ENCODE measurements at regions of chr15 and their contacts with region 1.

Region 1: GRCh38 chr15:101242160-101242998 is 9.5 kb downstream of the CHSY1 start:
- DNase-seq: peak; percentile 59
- ATAC-seq: 0 out of 2 replicates have a peak, but pooled peaks have one; percentile 7
- H3K4me3 ChIP-seq: no peak overlapping the region
- H3K27ac ChIP-seq: peak overlapping the region; percentile 27; the same call in 1 of the 2 replicates
- H3K4me1 ChIP-seq: peaks cover 34% of the 10 kb centered on the region
- H3K27me3 ChIP-seq: no peaks in the 10 kb centered on the region
- CTCF ChIP-seq: no peak
- POLR2A ChIP-seq: no peak
- RAD21 ChIP-seq: no peak

Region 2: DNA sequence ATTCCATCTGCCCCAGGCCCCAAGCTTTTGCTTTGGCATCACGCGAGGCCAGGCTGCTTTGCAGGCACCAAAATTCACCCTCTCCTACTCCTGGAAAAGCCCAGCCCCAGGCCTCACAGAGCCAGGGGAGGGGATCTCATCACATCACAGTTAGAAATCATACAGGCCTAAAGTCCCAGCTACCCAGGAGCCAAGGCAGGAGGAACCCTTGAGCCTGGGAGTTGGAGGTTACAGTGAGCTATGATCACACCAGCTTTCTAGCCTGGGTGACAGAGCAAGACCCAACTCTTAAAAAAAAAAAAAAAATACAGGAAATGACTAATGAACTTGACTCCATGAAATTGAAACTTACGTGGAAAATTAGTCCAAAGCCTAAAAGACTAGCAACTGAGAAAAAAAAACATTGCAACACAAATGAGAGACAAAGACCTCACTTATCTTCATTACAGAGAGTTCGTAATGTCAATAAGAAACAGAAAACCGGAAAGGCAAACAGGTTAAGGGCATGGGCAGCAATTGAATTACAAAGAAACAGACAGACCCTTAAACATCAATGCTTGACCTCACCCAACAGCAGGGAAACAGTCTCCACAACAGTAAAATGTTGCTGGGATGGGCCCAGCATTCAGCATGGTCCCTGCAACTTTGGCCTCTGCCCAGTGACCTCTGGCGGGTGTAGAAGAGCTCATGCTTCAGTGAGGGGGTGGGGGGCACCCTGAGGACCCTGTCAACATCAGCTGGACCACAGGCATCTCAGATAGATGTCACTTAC is 171.7 kb before region 1 on chr15:
- CTCF ChIA-PET with region 1: no interaction called
- POLR2A ChIA-PET with region 1: no interaction called
- dilution Hi-C with region 1: no loop called
- in situ Hi-C with region 1: no loop called
- intact Hi-C with region 1: no loop called
- DNase-seq: peak; percentile 89
- ATAC-seq: peak; percentile 46
- H3K4me3 ChIP-seq: no peak overlapping the region
- H3K27ac ChIP-seq: peak overlapping the region; percentile 94
- H3K4me1 ChIP-seq: peaks cover 25% of the 10 kb centered on the region
- H3K27me3 ChIP-seq: no peaks in the 10 kb centered on the region
- CTCF ChIP-seq: no peak
- POLR2A ChIP-seq: peak; percentile 75
- RAD21 ChIP-seq: no peak

Region 3: DNA sequence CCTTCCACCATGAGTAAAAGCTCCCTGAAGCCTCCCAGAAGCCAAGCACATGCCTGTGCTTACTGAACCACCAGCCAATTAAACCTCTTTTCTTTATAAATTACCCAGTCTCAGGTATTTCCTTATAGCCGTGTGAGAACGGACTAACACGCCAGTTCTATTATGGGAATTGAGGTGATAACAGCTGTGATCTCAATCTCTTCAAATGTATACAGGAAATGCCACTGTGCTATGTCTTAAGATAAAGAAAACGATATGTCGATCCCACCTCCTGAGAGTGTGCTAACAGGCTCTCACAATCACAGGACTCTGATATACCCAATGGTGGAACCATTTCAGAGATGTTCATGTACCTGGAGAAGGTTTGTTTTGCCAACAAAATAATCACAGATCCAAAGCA is 16.7 kb before region 1 on chr15:
- CTCF ChIA-PET with region 1: interaction called, 4 read pairs
- POLR2A ChIA-PET with region 1: no interaction called
- dilution Hi-C with region 1: no loop called
- in situ Hi-C with region 1: no loop called
- intact Hi-C with region 1: loop called (anchors 2 kb)
- DNase-seq: peak; percentile 63
- ATAC-seq: no peak
- H3K4me3 ChIP-seq: no peak overlapping the region
- H3K27ac ChIP-seq: peak overlapping the region; percentile 36; the same call in 1 of the 2 replicates
- H3K4me1 ChIP-seq: peaks cover 21% of the 10 kb centered on the region
- H3K27me3 ChIP-seq: no peaks in the 10 kb centered on the region
- CTCF ChIP-seq: no peak
- POLR2A ChIP-seq: no peak
- RAD21 ChIP-seq: no peak

Region 4: GRCh38 chr15:101528108-101528916 is 285.9 kb after region 1 on chr15:
- CTCF ChIA-PET with region 1: no interaction called
- POLR2A ChIA-PET with region 1: no interaction called
- dilution Hi-C with region 1: no loop called
- in situ Hi-C with region 1: no loop called
- intact Hi-C with region 1: no loop called
- DNase-seq: no peak
- ATAC-seq: peak; percentile 57
- H3K4me3 ChIP-seq: no peak overlapping the region
- H3K27ac ChIP-seq: no peak overlapping the region
- H3K4me1 ChIP-seq: no peaks in the 10 kb centered on the region
- H3K27me3 ChIP-seq: peaks cover 17% of the 10 kb centered on the region
- CTCF ChIP-seq: no peak
- POLR2A ChIP-seq: no peak
- RAD21 ChIP-seq: no peak